Psoas muscle (tissue), 8 donors: ENCODE measurements at regions of chr19 and their contacts with region 1.

Region 1: GRCh38 chr19:49145573-49146407 is 9.4 kb downstream of the HRC start:
- DNase-seq: peak; percentile 83 to 90
- ATAC-seq: peak; percentile 35 to 44 (median 39)
- H3K4me3 ChIP-seq: peak overlapping the region; percentile 43
- H3K27ac ChIP-seq: no peak overlapping the region
- H3K4me1 ChIP-seq: peaks cover 19% of the 10 kb centered on the region
- H3K27me3 ChIP-seq: no peaks in the 10 kb centered on the region
- CTCF ChIP-seq: peak; percentile 88

Region 2: DNA sequence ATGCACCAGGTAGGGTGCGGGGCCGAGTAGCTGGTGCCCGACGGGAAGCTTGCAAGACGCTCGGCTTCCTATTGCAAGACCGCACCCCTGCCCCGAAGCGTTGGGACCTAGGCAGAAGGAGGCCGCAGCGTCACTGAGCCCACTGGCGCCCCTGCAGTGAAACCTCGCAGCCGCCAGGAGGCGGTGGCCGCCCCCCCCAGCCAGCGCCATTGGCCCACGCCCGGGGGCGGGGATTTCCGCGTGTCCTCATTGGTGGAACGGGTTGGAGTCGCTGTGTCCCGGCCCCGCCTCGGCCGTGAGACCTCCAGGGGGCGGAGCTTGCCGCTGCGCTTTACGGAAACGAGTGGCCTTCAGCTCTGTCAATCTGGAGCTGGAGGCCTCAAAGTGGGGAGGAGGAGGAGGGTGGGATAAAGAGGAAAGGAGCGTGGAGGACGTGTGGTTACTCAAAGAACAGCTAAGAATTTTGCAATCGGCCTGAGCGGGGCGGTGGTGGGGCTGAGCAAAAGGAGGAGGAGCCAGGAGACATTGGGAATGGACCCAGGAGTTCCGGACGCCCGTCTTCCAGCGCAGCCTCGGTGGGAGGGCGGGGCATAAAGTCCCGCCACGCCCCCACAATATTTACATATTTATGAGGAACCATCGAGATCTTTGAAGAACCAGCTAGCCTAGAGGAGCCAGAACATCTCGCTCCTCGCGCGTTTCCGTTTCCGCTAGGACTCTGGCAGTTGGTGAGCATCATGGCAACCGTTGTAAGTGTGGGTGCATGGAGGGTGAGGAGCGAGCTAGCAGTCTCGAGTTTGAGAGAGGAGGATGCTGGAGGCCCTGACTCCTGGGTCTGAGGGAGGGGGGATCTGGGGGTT is 152.4 kb before region 1 on chr19 and contains the starts of genes GYS1 and RUVBL2:
- intact Hi-C with region 1: loop called in 1 of 2 experiments (anchors 10 kb)
- DNase-seq: peak; percentile 100
- ATAC-seq: peak; percentile 83 to 87 (median 84)
- H3K4me3 ChIP-seq: peak within 1 kb of the TSS; percentile 81
- H3K27ac ChIP-seq: peak within 1 kb of the TSS; percentile 90
- H3K4me1 ChIP-seq: peaks cover 48% of the 10 kb centered on the region
- H3K27me3 ChIP-seq: no peaks in the 10 kb centered on the region
- CTCF ChIP-seq: peak; percentile 97
- total RNA-seq, gene GYS1: 147 to 331 (median 238) TPM
- total RNA-seq, gene RUVBL2: 61.1 to 87.4 (median 81.8) TPM

Region 3: GRCh38 chr19:49073514-49074378 is 72.0 kb before region 1 on chr19:
- intact Hi-C with region 1: no loop called
- DNase-seq: peak; percentile 74 to 79
- ATAC-seq: peak; percentile 82 to 86 (median 84)
- H3K4me3 ChIP-seq: peak overlapping the region; percentile 47
- H3K27ac ChIP-seq: peak overlapping the region; percentile 77
- H3K4me1 ChIP-seq: peaks cover 3% of the 10 kb centered on the region
- H3K27me3 ChIP-seq: peaks cover 0 to 4% (median 0%) of the 10 kb centered on the region in 3 donors
- CTCF ChIP-seq: peak; percentile 51

Region 4: DNA sequence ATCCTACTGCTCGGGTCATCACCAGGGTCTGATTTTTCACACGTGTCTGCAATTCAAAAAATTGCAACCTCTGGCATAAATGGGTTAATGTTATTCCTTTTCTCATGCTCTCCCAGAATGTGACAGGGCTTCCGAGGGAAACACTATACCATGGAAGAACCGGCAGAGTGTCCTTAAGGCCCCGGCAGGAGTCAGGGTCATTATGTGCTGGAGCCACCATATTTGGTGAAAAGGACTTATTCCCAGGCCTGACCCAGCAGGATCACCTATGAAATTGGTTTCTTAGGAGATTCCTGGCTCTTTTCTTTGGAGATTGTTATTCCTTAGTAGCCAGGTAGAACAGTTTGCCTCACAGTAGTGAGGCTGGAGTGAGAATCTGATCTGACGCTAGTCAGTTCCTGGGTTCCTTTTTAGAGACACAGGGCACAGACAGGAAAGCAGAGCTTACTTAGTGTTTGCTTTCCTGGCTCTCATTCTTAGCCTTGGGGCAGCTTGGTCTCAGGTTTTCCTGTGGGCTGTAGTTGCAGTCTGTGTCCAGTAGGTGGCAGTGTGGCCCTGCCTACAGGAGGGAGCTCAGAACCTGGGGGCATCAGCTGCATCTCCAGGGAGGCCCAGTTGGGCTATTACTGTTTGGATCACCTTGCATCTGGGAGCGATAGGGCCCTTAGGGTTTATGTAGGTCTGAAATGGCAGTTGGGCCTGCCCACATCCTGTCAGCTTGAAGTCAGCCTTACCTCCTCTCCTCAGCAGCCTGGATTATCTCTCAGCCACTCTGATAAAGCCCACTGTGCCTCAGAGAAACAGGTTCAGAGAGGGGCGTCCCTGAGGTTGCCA is 48.1 kb before region 1 on chr19:
- intact Hi-C with region 1: loop called (anchors 1 to 2 kb)
- DNase-seq: peak; percentile 67 to 84
- ATAC-seq: peak; percentile 69 to 83 (median 80)
- H3K4me3 ChIP-seq: no peak overlapping the region
- H3K27ac ChIP-seq: peak overlapping the region; percentile 69
- H3K4me1 ChIP-seq: peaks cover 55% of the 10 kb centered on the region
- H3K27me3 ChIP-seq: no peaks in the 10 kb centered on the region
- CTCF ChIP-seq: peak; percentile 100

Region 5: DNA sequence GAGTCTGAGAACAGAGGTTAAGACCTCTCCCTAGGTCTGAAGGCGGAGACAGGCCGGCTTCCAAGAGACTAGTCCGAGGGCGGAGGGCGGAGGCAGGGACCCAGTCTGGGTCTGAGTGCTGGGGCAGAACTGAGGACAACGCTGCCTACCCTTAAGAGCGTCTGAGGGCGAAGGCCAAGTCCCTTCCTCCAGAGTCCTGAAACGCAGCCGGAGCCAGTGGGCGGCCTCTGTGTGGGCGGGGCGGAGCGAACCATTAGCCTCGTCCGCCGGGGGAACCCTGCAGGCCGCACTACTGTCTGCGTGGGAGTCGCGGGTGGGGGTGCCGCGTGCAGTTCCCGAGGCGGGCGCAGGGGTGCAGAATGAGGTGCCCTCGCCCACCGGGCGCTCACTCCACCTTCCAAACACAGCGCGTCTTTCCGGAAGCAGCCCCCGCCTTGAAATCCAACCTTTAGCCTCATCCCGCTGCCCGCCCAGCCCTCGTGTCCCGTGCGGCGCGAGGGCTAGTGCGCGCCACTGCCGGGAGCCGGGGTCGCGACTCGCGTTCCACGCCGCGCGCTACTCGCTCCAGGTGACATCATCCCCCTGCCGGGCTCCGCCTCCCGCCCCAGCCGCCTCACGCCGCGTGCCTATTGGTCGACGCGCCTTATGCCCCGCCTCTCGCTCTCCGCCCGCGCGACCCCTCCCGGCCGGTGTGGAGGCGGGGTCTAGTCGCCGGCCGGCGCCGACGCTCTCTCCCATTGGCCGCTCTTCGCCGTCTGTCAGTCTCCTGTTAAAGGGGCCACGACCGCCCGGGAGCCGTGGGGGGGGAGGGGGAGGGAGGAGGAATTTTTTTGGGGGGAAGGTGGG is 27.0 kb before region 1 on chr19 and contains the start of gene C19orf73:
- intact Hi-C with region 1: loop called (anchors 5 kb)
- DNase-seq: peak; percentile 95 to 98
- ATAC-seq: peak; percentile 91 to 94 (median 93)
- H3K4me3 ChIP-seq: peak within 1 kb of the TSS; percentile 85
- H3K27ac ChIP-seq: peak within 1 kb of the TSS; percentile 98
- H3K4me1 ChIP-seq: peaks cover 27% of the 10 kb centered on the region
- H3K27me3 ChIP-seq: no peaks in the 10 kb centered on the region
- CTCF ChIP-seq: no peak
- total RNA-seq, gene C19orf73: 0.54 to 1.6 (median 1.2) TPM

Region 6: GRCh38 chr19:49182848-49183344 is 37.1 kb after region 1 on chr19:
- intact Hi-C with region 1: no loop called
- DNase-seq: no peak
- ATAC-seq: peak in 1 of 4 donors; percentile 49
- H3K4me3 ChIP-seq: no peak overlapping the region
- H3K27ac ChIP-seq: no peak overlapping the region
- H3K4me1 ChIP-seq: no peaks in the 10 kb centered on the region
- H3K27me3 ChIP-seq: no peaks in the 10 kb centered on the region
- CTCF ChIP-seq: no peak

Region 7: DNA sequence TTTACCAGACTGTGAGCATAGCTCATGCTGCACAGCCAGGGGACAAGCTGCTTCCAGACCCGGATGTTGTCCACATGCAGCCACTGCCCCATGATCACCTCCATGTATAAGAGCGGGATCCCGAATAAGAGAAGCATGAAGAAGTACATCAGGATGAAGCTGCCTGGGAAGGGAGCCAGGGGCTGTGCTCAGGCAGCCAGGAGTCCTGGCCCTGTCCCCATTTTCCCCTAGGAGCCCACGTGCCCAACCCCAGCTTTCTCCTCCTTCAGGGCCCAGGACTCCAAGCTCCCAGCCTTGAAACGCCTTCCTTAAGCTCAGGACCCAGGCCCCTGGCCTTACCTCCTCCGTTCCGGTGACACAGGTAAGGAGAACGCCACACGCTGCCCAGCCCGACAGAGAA is 109.9 kb after region 1 on chr19:
- intact Hi-C with region 1: no loop called
- DNase-seq: no peak
- ATAC-seq: no peak
- H3K4me3 ChIP-seq: no peak overlapping the region
- H3K27ac ChIP-seq: no peak overlapping the region
- H3K4me1 ChIP-seq: no peaks in the 10 kb centered on the region
- H3K27me3 ChIP-seq: peaks cover 0 to 3% (median 0%) of the 10 kb centered on the region in 3 donors
- CTCF ChIP-seq: no peak